ENCODE measurements at regions of chr5 and their contacts with region 1.

Region 1: GRCh38 chr5:144308906-144309670 is 138.4 kb downstream of the KCTD16 start:
- DNase-seq: no peak
- H3K4me3 ChIP-seq: no peak overlapping the region
- H3K27me3 ChIP-seq: no peaks in the 10 kb centered on the region
- CTCF ChIP-seq: no peak

Region 2: GRCh38 chr5:144260121-144260520 is 49.0 kb before region 1 on chr5:
- CTCF ChIA-PET with region 1: no interaction called
- POLR2A ChIA-PET with region 1: interaction called, 23 read pairs
- DNase-seq: no peak
- H3K4me3 ChIP-seq: no peak overlapping the region
- H3K27me3 ChIP-seq: no peaks in the 10 kb centered on the region
- CTCF ChIP-seq: no peak